Activated T-helper 1 cell treated with anti-CD3 and anti-CD28 coated beads, Interleukin-12 subunit alpha, Interleukin-12 subunit beta, Interleukin-2, Interleukin-4 antibody, amounts not matched to agents 30 ng/mL and 10 ng/mL and 1 ng/mL, durations not matched to agents 14 hours and 24 hours and 36 hours (primary cell): ENCODE measurements at regions of chr2 and their contacts with region 1.

Region 1: GRCh38 chr2:28621172-28622100 is 125.6 kb downstream of the PLB1 start:
- DNase-seq: peak; percentile 77
- H3K4me3 Mint-ChIP-seq: peak overlapping the region; percentile 67
- H3K27ac Mint-ChIP-seq: peak overlapping the region; percentile 96
- H3K4me1 Mint-ChIP-seq: peaks cover 5% of the 10 kb centered on the region
- H3K27me3 Mint-ChIP-seq: no peaks in the 10 kb centered on the region

Region 2: GRCh38 chr2:28583899-28584553 is 37.4 kb before region 1 on chr2:
- intact Hi-C with region 1: loop called (anchors 5 kb)
- DNase-seq: peak; percentile 44
- H3K4me3 Mint-ChIP-seq: peak overlapping the region; percentile 29
- H3K27ac Mint-ChIP-seq: peak overlapping the region; percentile 74
- H3K4me1 Mint-ChIP-seq: peaks cover 44% of the 10 kb centered on the region
- H3K27me3 Mint-ChIP-seq: no peaks in the 10 kb centered on the region

Region 3: DNA sequence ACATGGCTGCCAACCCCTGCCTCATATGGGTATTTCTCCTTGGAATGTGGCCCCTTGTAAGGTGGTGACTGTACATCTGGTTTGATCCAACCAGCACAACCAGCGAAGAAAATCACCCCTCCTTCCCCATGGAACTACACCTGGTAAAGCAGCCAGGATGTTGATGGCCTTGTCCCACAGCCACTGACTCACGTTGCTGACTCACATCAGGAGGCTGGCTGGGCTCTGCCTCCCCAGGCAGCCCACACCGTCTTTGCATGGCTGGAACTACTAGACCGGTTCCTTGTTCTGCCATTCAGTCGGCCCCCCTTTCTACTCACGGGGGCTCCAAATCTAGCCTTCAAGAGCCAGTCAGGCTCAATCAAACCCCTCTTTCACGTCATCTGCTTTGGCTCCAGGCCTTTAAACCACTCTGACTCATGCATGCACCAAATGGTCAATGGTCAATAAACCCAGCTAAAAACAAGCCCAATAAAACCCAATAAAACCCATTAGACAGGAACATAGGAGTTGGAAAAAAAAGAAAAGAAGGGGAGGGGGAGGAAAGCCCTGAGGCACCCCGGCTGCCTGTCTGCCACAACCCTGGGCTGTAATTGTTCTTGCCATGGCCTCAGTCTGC is 10.7 kb before region 1 on chr2:
- intact Hi-C with region 1: loop called (anchors 1 kb)
- DNase-seq: no peak
- H3K4me3 Mint-ChIP-seq: peak overlapping the region; percentile 47
- H3K27ac Mint-ChIP-seq: peak overlapping the region; percentile 29
- H3K4me1 Mint-ChIP-seq: peaks cover 30% of the 10 kb centered on the region
- H3K27me3 Mint-ChIP-seq: no peaks in the 10 kb centered on the region

Region 4: DNA sequence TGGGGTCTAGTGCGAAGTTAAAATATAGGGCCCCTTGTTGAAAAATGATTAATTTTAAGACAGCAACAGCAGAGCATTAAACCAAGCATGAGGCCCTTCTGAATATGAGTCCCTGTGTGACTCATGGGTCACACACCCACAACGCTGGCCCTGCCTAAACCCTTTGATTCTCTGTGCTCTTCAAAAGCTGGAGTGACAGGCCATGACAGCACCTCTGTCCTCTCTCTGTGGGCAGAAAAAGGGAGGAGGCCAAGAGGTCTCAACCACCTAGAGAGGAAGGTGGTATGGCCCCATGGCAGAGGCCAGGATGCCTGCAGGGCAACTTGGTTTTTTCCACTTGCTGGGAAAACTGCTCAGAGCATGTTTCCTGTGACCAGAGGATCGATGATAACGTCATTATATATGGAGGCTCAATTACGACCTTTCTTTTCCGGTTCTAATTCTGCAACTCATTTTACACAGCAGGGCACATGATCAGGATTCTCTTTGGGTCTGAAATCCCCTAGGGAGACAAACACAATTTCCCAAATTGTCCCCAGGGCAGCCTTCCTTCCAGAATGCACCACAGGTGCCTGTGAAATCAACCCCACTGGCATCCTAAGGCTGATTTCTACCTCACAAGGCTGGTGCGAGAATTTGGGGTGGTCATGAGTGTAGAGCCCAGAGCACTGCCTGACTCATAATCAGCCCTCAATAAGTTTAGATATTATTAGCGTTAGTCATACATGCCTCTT is 28.2 kb after region 1 on chr2:
- intact Hi-C with region 1: loop called (anchors 1 kb)
- DNase-seq: no peak
- H3K4me3 Mint-ChIP-seq: no peak overlapping the region
- H3K27ac Mint-ChIP-seq: peak overlapping the region; percentile 84
- H3K4me1 Mint-ChIP-seq: peaks cover 48% of the 10 kb centered on the region
- H3K27me3 Mint-ChIP-seq: no peaks in the 10 kb centered on the region

Region 5: DNA sequence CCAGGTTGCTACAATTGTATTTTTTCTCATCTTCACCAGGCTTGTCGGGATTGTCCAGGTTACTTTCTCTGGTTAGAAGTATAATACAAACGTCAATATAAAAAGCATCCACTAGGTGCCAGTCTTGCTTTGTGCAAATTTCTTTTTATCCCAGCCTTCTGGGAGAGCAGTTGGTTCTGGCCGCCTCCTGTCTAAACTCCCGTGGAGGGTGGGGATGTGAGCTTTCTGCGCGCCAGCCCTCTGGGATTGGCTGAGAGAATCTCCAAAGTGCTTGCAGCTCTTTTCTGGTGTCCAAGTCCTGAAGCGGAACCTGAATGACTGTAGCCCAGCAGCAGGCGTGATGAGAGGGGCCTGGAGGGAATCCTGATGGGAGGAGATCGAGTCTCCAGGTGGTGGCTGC is 337.3 kb after region 1 on chr2:
- intact Hi-C with region 1: no loop called
- DNase-seq: peak; percentile 11
- H3K4me3 Mint-ChIP-seq: no peak overlapping the region
- H3K27ac Mint-ChIP-seq: no peak overlapping the region
- H3K4me1 Mint-ChIP-seq: no peaks in the 10 kb centered on the region
- H3K27me3 Mint-ChIP-seq: peaks cover 14% of the 10 kb centered on the region

Region 6: DNA sequence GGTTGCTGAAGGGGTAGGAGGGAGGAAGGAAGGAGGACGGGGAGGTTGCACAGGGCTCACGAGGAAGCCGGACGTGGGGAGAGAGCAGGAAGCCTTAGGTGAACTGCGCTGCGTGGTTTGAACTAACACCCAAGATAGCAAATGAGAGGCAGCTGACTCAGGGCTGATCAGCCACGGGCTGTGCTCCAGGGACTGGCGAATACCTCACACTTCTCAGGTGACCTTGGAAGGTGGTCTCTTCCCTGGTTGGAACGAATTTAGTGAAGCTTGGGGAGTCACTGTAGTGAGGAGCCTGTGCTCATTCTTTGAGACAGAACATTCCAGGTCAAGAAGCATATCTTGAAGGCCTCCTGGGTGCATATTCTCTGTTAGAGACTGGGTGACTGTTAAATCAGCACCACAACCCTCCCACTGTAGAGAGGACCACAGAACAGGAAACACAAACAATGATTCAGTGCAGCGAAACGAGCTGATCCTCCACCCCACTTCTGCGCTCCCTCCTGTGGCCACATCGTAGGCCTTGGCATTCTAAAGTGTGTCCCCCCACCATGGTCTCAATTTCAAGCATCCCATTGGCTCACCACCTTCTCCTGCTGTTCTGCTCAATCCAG is 393.5 kb after region 1 on chr2:
- intact Hi-C with region 1: loop called (anchors 10 kb)
- DNase-seq: peak; percentile 65
- H3K4me3 Mint-ChIP-seq: peak overlapping the region; percentile 88
- H3K27ac Mint-ChIP-seq: peak overlapping the region; percentile 99
- H3K4me1 Mint-ChIP-seq: peaks cover 65% of the 10 kb centered on the region
- H3K27me3 Mint-ChIP-seq: peaks cover 2% of the 10 kb centered on the region